ENCODE measurements at regions of chr2 and their contacts with region 1.

Region 1: DNA sequence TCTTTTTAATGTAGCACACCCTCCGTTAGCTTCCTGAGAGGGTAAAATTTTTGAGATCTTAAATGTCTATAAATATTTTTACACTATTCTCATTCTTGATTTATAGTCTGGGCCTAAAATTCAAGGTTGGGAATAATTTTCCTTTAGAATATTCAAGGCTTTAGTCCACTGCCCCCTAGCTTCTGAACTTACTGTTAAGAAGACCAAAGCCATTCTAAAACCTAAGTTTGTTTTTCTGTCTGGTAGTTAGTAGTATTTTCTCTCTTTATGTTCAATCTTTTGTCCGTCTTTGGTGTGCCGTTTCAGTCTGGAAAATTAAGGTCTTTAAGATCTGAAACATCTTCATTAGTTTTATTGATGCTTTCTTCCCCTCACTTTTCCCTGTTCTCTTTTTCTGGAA is 14.5 kb downstream of the OSBPL6 start:
- DNase-seq: no peak
- H3K4me3 ChIP-seq: no peak overlapping the region
- H3K27ac ChIP-seq: no peak overlapping the region
- H3K4me1 ChIP-seq: no peaks in the 10 kb centered on the region
- H3K27me3 ChIP-seq: no peaks in the 10 kb centered on the region
- CTCF ChIP-seq: peak; percentile 17 to 38 (median 24)
- EP300 ChIP-seq: no peak
- POLR2A ChIP-seq: no peak

Region 2: GRCh38 chr2:178128836-178129630 is 79.8 kb before region 1 on chr2:
- intact Hi-C with region 1: loop called (anchors 5 kb)
- DNase-seq: no peak
- H3K4me3 ChIP-seq: no peak overlapping the region
- H3K27ac ChIP-seq: no peak overlapping the region
- H3K4me1 ChIP-seq: no peaks in the 10 kb centered on the region
- H3K27me3 ChIP-seq: no peaks in the 10 kb centered on the region
- CTCF ChIP-seq: no peak
- EP300 ChIP-seq: no peak
- POLR2A ChIP-seq: no peak

Region 3: GRCh38 chr2:178345951-178346350 is 137.1 kb after region 1 on chr2:
- intact Hi-C with region 1: no loop called
- DNase-seq: no peak
- H3K4me3 ChIP-seq: no peak overlapping the region
- H3K27ac ChIP-seq: no peak overlapping the region
- H3K4me1 ChIP-seq: no peaks in the 10 kb centered on the region
- H3K27me3 ChIP-seq: no peaks in the 10 kb centered on the region
- CTCF ChIP-seq: no peak
- EP300 ChIP-seq: no peak
- POLR2A ChIP-seq: no peak